ENCODE measurements at regions of chr7 and their contacts with region 1.

Region 1: GRCh38 chr7:157273208-157274093 is 63.4 kb upstream of the DNAJB6 start:
- DNase-seq: peak; percentile 91
- H3K4me3 ChIP-seq: no peak overlapping the region
- H3K27ac ChIP-seq: peak overlapping the region in 2 of 8 donors; percentile 9 to 18
- H3K4me1 ChIP-seq: peaks cover 7 to 56% (median 23%) of the 10 kb centered on the region in 6 donors
- H3K27me3 ChIP-seq: peaks cover 0 to 15% (median 0%) of the 10 kb centered on the region in 7 donors
- CTCF ChIP-seq: peak; percentile 81 to 98 (median 95)
- POLR2A ChIP-seq: no peak

Region 2: DNA sequence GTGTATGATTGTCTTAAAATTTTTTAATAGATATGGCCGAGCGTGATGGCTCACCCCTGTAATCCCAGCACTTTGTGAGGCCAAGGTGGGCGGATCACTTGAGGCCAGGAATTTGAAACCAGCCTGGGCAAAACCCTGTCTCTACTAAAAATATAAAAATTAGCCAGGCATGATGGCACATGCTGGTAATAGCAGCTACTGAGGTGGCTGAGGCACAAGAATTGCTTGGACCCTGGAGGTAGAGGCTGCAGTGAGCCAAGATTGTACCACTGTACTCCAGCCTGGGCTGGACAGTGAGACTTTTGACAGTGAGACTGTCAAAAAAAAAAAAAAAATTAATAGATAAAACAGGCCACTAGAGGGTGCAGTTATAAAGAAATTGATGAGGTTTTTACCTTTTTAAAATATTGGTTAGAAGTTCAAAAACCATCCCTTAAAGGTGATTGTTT is 303.5 kb before region 1 on chr7:
- intact Hi-C with region 1: loop called (anchors 10 kb)
- DNase-seq: no peak
- H3K4me3 ChIP-seq: no peak overlapping the region
- H3K27ac ChIP-seq: no peak overlapping the region
- H3K4me1 ChIP-seq: no peaks in the 10 kb centered on the region
- H3K27me3 ChIP-seq: no peaks in the 10 kb centered on the region
- CTCF ChIP-seq: peak in 3 of 11 experiments; percentile 19 to 32 (median 22)
- POLR2A ChIP-seq: no peak